Posterior vena cava (tissue), 2 donors: ENCODE measurements at regions of chr16 and their contacts with region 1.

Region 1: DNA sequence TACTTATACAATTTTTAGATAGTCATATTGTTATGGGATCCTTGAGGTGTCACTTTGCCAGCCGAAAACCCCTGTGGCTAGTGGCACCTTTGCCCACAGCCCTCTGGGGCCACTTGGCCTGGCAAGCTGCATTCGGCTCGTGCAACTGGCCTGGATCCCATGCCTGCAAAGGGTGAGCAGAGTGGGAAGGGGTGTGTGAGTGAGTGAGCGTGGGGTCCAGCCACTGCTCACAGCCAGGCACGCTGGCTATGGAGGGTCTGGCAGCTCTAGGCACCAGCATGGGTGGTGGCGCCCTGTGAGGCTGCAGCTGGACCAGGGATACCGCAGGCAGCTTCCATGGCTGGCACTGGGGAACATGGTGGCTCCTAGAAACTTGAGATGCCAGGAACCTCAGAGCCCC is 49.0 kb downstream of the ESRP2 start:
- DNase-seq: no peak

Region 2: DNA sequence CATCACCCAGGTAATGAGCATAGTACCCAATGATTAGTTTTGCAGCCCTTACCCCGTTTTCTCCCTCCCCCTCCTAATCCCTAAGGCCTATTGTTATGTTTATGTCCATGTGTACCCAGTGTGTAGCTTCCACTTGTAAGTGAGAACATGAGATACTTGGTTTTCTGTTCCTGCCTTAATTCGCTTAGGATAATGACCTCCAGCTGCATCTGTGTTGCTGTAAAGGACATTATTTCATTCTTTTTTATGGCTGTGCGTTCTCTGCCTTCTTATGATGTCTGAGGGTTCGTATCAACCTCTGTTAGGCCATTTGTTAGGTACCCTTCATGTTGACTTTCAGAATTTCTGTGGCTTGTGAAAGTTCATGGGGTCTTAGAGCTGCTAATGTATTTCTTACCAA is 593.6 kb before region 1 on chr16:
- intact Hi-C with region 1: loop called in 1 of 2 experiments (anchors 5 kb)
- DNase-seq: no peak